CD8-positive, alpha-beta T cell (primary cell): ENCODE measurements at regions of chr20 and their contacts with region 1.

Region 1: DNA sequence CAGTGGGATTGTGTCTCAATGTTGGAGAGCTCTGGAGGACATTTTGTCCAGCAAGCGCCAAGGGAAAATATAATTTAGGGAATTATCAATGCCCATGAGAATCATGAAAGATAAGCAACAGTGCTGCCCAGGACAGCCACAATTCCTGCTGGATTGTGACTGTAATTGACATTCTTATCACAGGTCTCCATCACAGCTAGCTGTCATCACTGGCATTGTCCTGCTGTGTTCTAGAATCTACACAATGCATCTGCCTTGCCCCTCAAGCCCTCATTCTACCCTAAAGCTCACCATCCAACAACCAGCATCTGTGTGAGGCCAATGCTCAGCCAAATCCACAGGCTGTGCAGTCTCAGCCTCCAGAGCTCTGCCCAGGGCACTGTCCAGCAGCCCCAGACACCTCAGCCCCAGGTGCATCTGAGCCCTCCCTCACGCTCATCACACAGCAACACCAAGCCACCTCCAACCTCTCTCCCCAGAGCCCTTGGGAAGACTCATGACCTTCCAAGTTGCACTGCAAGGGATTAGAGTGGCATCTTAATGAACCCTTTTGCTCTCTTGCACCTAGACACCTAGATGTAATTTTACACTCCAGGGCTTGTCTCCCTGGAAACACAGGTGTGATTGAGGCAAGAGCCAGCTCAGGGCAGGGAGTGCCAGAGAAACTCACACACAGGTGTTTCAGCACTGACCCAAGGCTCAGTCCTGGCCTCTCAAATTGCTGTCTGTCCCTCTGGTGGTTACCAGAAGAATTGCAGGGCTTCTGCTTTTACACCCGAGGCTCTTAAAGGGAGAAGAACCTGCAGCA is 85.3 kb upstream of the PHACTR3 start:
- DNase-seq: peak in 5 of 9 experiments; percentile 5 to 55 (median 30)
- ATAC-seq: peak; percentile 61
- H3K4me3 ChIP-seq: no peak overlapping the region
- H3K4me3 Mint-ChIP-seq: no peak overlapping the region
- H3K27ac ChIP-seq: no peak overlapping the region
- H3K27ac Mint-ChIP-seq: no peak overlapping the region
- H3K4me1 ChIP-seq: no peaks in the 10 kb centered on the region
- H3K4me1 Mint-ChIP-seq: no peaks in the 10 kb centered on the region
- H3K27me3 ChIP-seq: peaks cover 6 to 12% of the 10 kb centered on the region in 2 experiments
- H3K27me3 Mint-ChIP-seq: peaks cover 60% of the 10 kb centered on the region
- CTCF ChIP-seq: peak; percentile 95

Region 2: DNA sequence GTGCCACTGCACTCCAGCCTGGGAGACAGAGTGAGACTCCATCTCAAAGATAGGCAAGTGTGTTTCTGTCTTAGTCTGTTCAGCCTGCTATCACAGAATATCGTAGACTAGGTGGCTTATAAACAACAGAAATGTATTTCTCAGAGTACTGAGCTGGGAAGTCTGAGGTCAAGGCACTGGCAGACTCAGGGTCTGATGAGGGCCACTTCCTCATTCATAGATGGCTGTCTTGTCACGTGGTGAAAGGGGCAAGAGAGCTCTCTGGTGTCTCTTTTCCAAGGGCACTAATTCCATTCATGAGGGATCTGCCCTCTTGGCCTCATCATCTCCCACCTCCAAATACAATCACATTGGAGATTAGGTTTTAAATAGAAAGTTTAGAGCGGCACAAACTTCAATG is 10.4 kb before region 1 on chr20:
- CTCF ChIA-PET with region 1: interaction called, 13 read pairs
- POLR2A ChIA-PET with region 1: no interaction called
- intact Hi-C with region 1: no loop called
- DNase-seq: no peak
- ATAC-seq: no peak
- H3K4me3 ChIP-seq: no peak overlapping the region
- H3K4me3 Mint-ChIP-seq: no peak overlapping the region
- H3K27ac ChIP-seq: no peak overlapping the region
- H3K27ac Mint-ChIP-seq: no peak overlapping the region
- H3K4me1 ChIP-seq: no peaks in the 10 kb centered on the region
- H3K4me1 Mint-ChIP-seq: no peaks in the 10 kb centered on the region
- H3K27me3 ChIP-seq: no peaks in the 10 kb centered on the region
- H3K27me3 Mint-ChIP-seq: peaks cover 14% of the 10 kb centered on the region
- CTCF ChIP-seq: no peak